GM10248 (cell line): ENCODE measurements at regions of chr2 and their contacts with region 1.

Region 1: DNA sequence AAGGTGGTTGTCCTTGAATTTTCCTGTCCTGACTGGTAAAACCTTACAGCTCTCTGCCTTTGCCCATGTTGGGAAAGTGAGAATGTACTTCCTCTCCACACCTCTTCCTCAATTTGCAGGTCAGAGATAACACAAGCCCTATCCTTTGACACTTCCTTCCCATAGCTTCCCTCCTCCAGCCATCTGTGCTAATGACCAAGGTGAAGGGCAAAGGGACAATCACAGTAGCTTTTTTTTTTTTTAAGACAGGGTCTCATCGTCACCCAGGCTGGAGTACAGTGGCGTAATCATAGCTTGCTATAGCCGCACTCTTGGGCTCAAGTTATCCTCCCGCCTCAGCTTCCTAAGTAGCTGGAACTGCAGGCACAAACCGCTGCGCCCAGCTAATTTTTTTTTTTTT is 24.3 kb upstream of the STPG4 start:
- DNase-seq: no peak
- CTCF ChIP-seq: no peak

Region 2: DNA sequence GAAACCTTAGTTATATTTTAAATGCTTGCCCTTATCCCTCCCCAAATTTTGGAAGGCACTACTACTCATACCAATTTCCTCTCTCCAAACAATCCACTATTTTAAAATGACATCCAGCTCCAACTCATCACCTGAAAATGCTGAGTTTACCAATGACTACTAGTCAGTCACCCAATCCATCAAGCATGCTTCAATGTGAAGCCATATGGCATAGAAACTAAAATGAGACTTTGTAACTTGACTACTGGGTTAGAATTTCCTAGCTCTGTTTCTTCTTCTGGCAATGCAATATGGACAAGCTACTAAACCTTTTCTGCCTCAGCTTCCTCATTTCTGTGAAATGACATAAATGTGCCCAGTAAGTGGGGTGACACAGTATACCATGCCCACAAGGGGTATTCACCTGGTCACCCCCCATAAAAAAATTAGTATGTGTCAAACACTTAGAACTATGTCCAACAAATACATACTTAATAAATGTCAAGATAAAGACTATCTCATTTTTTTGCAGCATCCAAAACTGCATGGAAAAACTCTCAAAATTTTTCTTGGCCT is 14.3 kb before region 1 on chr2:
- CTCF ChIA-PET with region 1: interaction called, 13 read pairs
- POLR2A ChIA-PET with region 1: interaction called, 3 read pairs
- DNase-seq: no peak
- CTCF ChIP-seq: no peak